PC-3 (cell line): ENCODE measurements at regions of chr14 and their contacts with region 1.

Region 1: GRCh38 chr14:58749066-58749669 is 111.4 kb downstream of the DACT1 start:
- DNase-seq: peak; percentile 100
- ATAC-seq: peak; percentile 61
- H3K4me3 ChIP-seq: 0 out of 2 replicates have a peak overlapping the region, but pooled peaks have one; percentile 2
- H3K27ac ChIP-seq: peak overlapping the region; percentile 81
- H3K4me1 ChIP-seq: peaks cover 60% of the 10 kb centered on the region
- H3K27me3 ChIP-seq: no peaks in the 10 kb centered on the region
- CTCF ChIP-seq: no peak

Region 2: DNA sequence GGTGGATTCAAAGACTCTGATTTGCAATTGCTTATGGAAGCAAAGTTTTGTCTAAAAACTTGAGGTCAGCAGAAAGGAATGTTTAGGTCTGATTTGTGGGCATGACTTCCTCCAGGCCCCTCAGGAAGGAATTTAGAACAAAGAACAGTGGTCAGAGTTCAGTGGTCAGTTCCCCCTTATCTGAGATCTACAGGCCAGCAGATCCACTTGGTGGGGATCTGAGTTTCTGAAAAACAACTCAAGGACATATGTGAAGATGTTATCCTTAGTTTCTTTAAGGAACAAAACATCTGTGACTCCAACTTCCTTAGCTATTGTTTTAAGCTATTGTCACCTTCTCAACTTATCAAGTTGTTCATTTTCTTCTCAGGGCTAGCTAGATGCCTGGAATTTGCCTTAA is 1386.8 kb before region 1 on chr14:
- CTCF ChIA-PET with region 1: no interaction called
- POLR2A ChIA-PET with region 1: no interaction called
- intact Hi-C with region 1: loop called (anchors 10 kb)
- DNase-seq: peak; percentile 45
- ATAC-seq: peak; percentile 29; the same call in 1 of the 2 replicates
- H3K4me3 ChIP-seq: no peak overlapping the region
- H3K27ac ChIP-seq: no peak overlapping the region
- H3K4me1 ChIP-seq: peaks cover 8% of the 10 kb centered on the region; the same call in 1 of the 2 replicates
- H3K27me3 ChIP-seq: peaks cover 41% of the 10 kb centered on the region
- CTCF ChIP-seq: no peak

Region 3: DNA sequence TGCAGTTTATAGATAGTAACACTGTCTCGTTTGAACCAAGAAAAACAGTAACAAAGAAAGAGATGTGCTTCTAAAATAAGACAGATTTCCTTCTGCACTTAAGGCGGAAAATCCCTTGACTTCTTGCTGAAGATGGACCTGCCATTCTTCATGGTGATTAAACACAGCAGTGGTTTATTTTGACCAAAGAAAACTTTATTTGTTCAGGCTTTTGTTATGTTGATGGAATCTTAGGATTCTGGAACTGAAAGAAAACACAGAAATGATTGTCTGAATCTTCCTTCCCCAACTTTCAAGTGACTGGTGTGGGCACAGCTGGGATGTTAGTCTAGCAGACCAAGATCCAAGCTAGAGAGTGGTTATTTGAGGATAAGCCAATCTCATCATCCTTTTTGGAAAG is 39.2 kb before region 1 on chr14:
- CTCF ChIA-PET with region 1: no interaction called
- POLR2A ChIA-PET with region 1: interaction called, 24 read pairs
- intact Hi-C with region 1: no loop called
- DNase-seq: no peak
- ATAC-seq: no peak
- H3K4me3 ChIP-seq: no peak overlapping the region
- H3K27ac ChIP-seq: no peak overlapping the region
- H3K4me1 ChIP-seq: no peaks in the 10 kb centered on the region
- H3K27me3 ChIP-seq: peaks cover 50% of the 10 kb centered on the region
- CTCF ChIP-seq: no peak

Region 4: GRCh38 chr14:58731465-58732330 is 17.5 kb before region 1 on chr14:
- CTCF ChIA-PET with region 1: interaction called, 6 read pairs
- POLR2A ChIA-PET with region 1: no interaction called
- intact Hi-C with region 1: loop called (anchors 1 kb)
- DNase-seq: peak; percentile 100
- ATAC-seq: peak; percentile 94
- H3K4me3 ChIP-seq: peak overlapping the region; percentile 1; the same call in 1 of the 2 replicates
- H3K27ac ChIP-seq: peak overlapping the region; percentile 85
- H3K4me1 ChIP-seq: peaks cover 31% of the 10 kb centered on the region
- H3K27me3 ChIP-seq: no peaks in the 10 kb centered on the region
- CTCF ChIP-seq: no peak

Region 5: DNA sequence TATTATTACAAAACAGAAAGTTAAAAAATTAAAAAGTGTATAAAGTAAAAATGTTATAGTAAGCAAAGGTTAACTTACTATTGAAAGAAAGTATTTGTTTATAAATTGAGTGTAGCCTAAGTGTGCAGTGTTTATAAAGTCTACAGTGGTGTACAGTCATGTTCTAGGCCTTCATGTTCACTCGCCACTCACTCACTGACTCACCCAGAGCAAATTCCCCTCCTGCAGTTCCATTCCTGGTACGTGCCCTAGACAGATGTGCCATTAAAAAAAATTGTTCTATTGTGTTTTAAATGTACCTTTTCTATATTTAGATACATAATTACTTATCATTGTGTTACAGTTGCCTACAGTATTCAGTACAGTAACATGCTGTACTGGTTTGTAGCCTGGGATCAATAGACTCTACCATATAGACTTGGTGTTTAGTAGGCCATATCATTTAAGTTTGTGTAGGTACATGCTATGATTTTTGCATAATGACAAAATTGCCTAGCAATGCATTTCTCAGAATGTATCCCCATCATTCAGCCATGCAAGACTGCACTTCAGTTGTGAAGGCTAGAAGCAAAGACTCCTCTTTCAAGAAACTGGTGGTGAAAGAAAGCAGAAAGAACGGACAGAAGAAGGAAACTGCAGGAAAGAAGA is 10.9 kb before region 1 on chr14:
- CTCF ChIA-PET with region 1: no interaction called
- POLR2A ChIA-PET with region 1: interaction called, 4 read pairs
- intact Hi-C with region 1: loop called (anchors 1 kb)
- DNase-seq: peak; percentile 99
- ATAC-seq: peak; percentile 99
- H3K4me3 ChIP-seq: no peak overlapping the region
- H3K27ac ChIP-seq: peak overlapping the region; percentile 50
- H3K4me1 ChIP-seq: peaks cover 32% of the 10 kb centered on the region
- H3K27me3 ChIP-seq: no peaks in the 10 kb centered on the region
- CTCF ChIP-seq: no peak

Region 6: DNA sequence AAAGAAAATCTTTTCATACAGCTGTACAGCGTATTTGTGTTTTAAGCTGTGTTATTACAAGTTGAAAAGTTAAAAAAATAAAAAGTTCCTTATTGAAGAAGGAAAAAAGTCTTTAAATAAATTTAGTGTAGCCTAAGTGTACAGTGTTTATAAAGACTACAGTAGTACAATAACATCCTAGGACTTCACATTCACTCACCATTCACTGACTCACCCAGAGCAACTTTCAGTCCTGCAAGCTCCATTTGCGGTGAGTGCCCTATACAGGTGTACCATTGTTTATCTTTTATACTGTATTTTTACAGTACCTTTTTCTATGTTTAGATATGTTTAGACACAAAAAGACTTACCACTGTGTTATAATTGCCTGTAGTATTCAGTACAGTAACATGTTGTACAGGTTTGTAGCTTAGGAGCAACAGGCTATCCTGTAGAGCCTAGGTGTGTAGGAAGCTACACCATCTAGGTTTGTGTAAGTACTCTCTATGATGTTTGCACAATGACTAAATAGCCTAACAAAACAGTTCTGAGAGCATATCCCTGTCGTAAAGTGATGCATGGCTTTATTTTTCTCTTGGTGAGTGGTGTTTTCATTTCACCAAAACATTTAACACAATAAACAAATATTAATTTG is 163.7 kb after region 1 on chr14:
- CTCF ChIA-PET with region 1: no interaction called
- POLR2A ChIA-PET with region 1: interaction called, 16 read pairs
- intact Hi-C with region 1: no loop called
- DNase-seq: peak; percentile 92
- ATAC-seq: peak; percentile 95
- H3K4me3 ChIP-seq: peak overlapping the region; percentile 15; the same call in 1 of the 2 replicates
- H3K27ac ChIP-seq: no peak overlapping the region
- H3K4me1 ChIP-seq: peaks cover 22% of the 10 kb centered on the region
- H3K27me3 ChIP-seq: no peaks in the 10 kb centered on the region
- CTCF ChIP-seq: no peak

Region 7: GRCh38 chr14:59483900-59484638 is 734.9 kb after region 1 on chr14 and contains the starts of genes JKAMP and L3HYPDH:
- CTCF ChIA-PET with region 1: interaction called, 24 read pairs
- POLR2A ChIA-PET with region 1: no interaction called
- intact Hi-C with region 1: no loop called
- DNase-seq: peak; percentile 100
- ATAC-seq: peak; percentile 75
- H3K4me3 ChIP-seq: peak within 1 kb of the TSS; percentile 79
- H3K27ac ChIP-seq: peak within 1 kb of the TSS; percentile 83
- H3K4me1 ChIP-seq: peaks cover 42% of the 10 kb centered on the region
- H3K27me3 ChIP-seq: no peaks in the 10 kb centered on the region
- CTCF ChIP-seq: peak; percentile 92
- total RNA-seq, gene JKAMP: 130 and 147 TPM in 2 replicates
- total RNA-seq, gene L3HYPDH: 108 and 117 TPM in 2 replicates